CD8-positive, alpha-beta T cell (primary cell): ENCODE measurements at regions of chr21 and their contacts with region 1.

Region 1: DNA sequence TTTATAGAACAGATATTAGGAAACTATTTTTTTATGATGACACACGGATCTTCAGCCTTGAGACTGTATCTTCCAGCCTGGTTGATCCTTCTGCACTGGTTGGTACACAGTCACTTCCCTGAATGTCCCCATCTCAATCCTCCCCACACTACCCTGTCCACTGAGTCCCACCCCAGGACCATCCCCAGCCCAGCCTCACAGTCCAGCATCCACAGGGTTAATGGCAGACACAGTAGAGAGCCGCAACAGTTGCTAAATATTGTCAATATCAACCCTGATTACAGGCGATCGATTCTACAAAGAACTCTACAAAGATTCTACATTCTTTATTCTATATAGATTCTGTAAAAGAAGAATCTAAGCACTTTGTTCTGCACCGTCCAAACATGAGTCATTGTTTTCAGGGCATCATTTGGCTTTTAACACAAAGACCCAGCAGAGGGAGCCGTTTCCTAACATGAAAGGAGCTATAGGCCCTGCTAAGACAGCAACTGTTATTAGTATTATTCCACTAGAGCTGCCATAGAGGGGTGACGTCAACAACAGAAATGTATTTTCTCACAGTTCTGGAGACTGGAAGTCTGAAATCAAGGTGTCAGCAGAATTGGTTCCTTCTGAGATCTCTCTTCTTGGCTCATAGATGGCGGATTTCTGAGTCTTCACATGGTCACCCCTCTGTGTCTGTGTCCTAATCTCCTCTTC is 30.1 kb upstream of the IFNAR2 start:
- DNase-seq: peak; percentile 63 to 92 (median 82)
- ATAC-seq: peak; percentile 93
- H3K4me3 ChIP-seq: no peak overlapping the region
- H3K4me3 Mint-ChIP-seq: no peak overlapping the region
- H3K27ac ChIP-seq: no peak overlapping the region
- H3K27ac Mint-ChIP-seq: peak overlapping the region; percentile 84
- H3K4me1 ChIP-seq: peaks cover 19% of the 10 kb centered on the region
- H3K4me1 Mint-ChIP-seq: peaks cover 28% of the 10 kb centered on the region
- H3K27me3 ChIP-seq: no peaks in the 10 kb centered on the region
- H3K27me3 Mint-ChIP-seq: no peaks in the 10 kb centered on the region
- CTCF ChIP-seq: peak; percentile 77

Region 2: DNA sequence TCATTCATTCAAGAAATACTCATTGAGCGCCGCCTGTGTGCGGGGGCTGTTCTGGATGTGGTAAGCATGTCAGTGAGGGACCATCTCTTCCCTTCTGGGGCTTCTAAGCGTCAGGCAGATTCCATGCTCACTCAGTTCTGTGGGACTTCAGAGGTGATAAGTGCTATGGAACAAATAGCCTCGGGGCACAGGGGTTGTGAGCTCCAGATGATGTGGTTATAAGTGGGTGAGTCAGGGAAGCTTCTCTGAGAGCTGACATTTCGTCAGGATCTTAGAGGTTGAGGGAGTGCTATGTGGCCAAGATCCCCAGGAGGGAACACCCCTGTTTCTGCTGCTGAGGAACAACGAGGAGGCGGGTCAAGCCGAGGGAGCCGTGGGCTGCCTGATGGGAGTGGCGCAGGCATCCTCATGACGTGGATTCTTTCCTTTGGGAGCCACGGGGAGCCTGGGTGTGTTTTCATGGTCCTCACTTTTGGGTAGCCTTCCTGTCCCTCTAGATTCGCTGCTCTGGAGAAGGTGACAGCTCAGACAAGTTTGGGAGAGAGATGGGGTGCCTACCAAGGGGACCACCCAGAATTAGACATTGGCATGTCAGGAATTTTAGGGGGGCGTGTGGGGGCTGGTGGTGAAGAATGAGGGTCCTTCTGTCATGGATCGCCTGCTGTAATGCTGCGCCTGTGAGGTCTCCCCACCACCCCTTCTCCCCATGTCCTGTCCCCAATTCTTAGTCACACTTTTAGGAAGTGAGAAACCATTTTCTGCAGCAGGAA is 1288.3 kb before region 1 on chr21:
- CTCF ChIA-PET with region 1: no interaction called
- POLR2A ChIA-PET with region 1: no interaction called
- intact Hi-C with region 1: no loop called
- DNase-seq: no peak
- ATAC-seq: no peak
- H3K4me3 ChIP-seq: no peak overlapping the region
- H3K4me3 Mint-ChIP-seq: no peak overlapping the region
- H3K27ac ChIP-seq: no peak overlapping the region
- H3K27ac Mint-ChIP-seq: no peak overlapping the region
- H3K4me1 ChIP-seq: no peaks in the 10 kb centered on the region
- H3K4me1 Mint-ChIP-seq: no peaks in the 10 kb centered on the region
- H3K27me3 ChIP-seq: no peaks in the 10 kb centered on the region
- H3K27me3 Mint-ChIP-seq: peaks cover 25% of the 10 kb centered on the region
- CTCF ChIP-seq: no peak

Region 3: GRCh38 chr21:32653311-32653901 is 546.3 kb before region 1 on chr21:
- CTCF ChIA-PET with region 1: no interaction called
- POLR2A ChIA-PET with region 1: no interaction called
- intact Hi-C with region 1: loop called (anchors 2 kb)
- DNase-seq: peak in 4 of 9 experiments; percentile 12 to 52 (median 31)
- ATAC-seq: peak; percentile 52
- H3K4me3 ChIP-seq: no peak overlapping the region
- H3K4me3 Mint-ChIP-seq: no peak overlapping the region
- H3K27ac ChIP-seq: no peak overlapping the region
- H3K27ac Mint-ChIP-seq: no peak overlapping the region
- H3K4me1 ChIP-seq: no peaks in the 10 kb centered on the region
- H3K4me1 Mint-ChIP-seq: no peaks in the 10 kb centered on the region
- H3K27me3 ChIP-seq: no peaks in the 10 kb centered on the region
- H3K27me3 Mint-ChIP-seq: no peaks in the 10 kb centered on the region
- CTCF ChIP-seq: peak; percentile 62

Region 4: DNA sequence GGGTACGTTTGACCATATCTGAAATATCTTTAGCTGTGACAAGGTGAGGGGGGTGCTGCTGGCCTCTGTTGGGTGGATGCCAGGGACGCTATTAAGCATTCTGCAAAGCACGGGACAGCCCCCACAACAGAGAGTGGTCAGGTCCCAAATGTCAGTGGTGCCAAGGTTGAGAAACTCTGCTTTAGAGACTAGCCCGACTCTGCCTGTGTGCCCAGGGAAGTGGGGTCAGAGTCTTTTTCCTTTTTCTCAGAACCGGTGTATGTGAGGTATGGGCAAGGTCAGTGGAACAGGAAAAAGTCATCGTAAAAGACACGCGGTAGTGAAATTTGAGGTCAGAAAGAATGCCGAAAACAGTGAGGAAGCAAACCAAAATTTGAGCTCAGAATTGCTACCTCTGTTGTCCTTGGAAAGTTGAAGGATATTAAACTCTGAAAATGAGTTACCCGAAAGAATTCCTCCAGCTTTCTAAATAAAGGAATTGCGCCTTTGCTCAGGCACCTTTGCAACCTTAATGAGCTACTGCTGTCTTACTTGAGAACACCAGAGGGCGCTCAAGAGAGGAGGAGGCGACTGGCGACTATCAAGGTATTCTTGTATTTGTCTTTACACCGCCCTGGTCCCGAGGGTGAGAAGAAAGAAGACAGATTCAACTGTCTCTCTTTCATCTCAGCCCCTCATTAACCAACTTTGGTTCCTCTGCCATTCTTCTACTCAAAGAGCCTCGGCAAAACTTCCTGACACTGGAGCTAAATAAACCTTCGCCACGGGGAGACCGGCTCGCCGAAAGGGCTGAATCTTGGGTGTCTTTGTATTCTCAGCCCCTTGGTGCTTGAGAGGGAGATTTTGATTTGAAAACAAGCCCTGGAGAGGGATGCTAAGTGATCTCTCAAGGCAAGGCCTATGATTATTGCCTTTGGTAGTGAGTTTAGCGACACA is 259.3 kb before region 1 on chr21:
- CTCF ChIA-PET with region 1: interaction called, 31 read pairs
- POLR2A ChIA-PET with region 1: interaction called, 3 read pairs
- intact Hi-C with region 1: loop called (anchors 1 kb)
- DNase-seq: peak in 8 of 9 experiments; percentile 15 to 75 (median 44)
- ATAC-seq: peak; percentile 54
- H3K4me3 ChIP-seq: no peak overlapping the region
- H3K4me3 Mint-ChIP-seq: no peak overlapping the region
- H3K27ac ChIP-seq: no peak overlapping the region
- H3K27ac Mint-ChIP-seq: no peak overlapping the region
- H3K4me1 ChIP-seq: no peaks in the 10 kb centered on the region
- H3K4me1 Mint-ChIP-seq: peaks cover 3% of the 10 kb centered on the region
- H3K27me3 ChIP-seq: no peaks in the 10 kb centered on the region
- H3K27me3 Mint-ChIP-seq: no peaks in the 10 kb centered on the region
- CTCF ChIP-seq: peak; percentile 74

Region 5: GRCh38 chr21:33011462-33011861 is 188.2 kb before region 1 on chr21:
- CTCF ChIA-PET with region 1: no interaction called
- POLR2A ChIA-PET with region 1: no interaction called
- intact Hi-C with region 1: no loop called
- DNase-seq: peak in 1 of 9 experiments; percentile 33
- ATAC-seq: no peak
- H3K4me3 ChIP-seq: no peak overlapping the region
- H3K4me3 Mint-ChIP-seq: no peak overlapping the region
- H3K27ac ChIP-seq: no peak overlapping the region
- H3K27ac Mint-ChIP-seq: no peak overlapping the region
- H3K4me1 ChIP-seq: no peaks in the 10 kb centered on the region
- H3K4me1 Mint-ChIP-seq: no peaks in the 10 kb centered on the region
- H3K27me3 ChIP-seq: peaks cover 0 to 6% of the 10 kb centered on the region in 2 experiments
- H3K27me3 Mint-ChIP-seq: peaks cover 36% of the 10 kb centered on the region
- CTCF ChIP-seq: no peak

Region 6: DNA sequence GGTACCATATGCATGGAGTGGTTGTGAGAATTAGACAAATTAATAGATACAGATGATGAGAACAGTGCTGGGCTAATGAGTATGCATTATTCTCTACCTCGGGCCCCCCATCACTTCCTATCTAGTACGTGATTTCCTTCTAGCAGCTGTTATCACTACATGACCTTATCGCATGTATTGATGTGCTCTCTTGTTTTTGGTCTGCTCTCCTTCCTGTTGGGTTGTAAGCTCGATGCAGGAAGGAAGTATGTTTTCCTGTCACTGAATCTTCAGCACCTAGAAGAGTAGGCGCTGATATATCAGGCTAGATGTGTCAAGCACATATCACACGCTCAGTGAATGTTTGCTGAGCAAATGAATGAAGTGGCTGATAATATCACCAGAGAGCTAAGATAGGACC is 13.8 kb before region 1 on chr21:
- CTCF ChIA-PET with region 1: interaction called, 21 read pairs
- POLR2A ChIA-PET with region 1: interaction called, 5 read pairs
- intact Hi-C with region 1: no loop called
- DNase-seq: peak in 6 of 9 experiments; percentile 18 to 73 (median 35)
- ATAC-seq: peak; percentile 88
- H3K4me3 ChIP-seq: peak overlapping the region in 1 of 2 experiments; percentile 1
- H3K4me3 Mint-ChIP-seq: peak overlapping the region; percentile 51
- H3K27ac ChIP-seq: peak overlapping the region in 1 of 2 experiments; percentile 68
- H3K27ac Mint-ChIP-seq: peak overlapping the region; percentile 85
- H3K4me1 ChIP-seq: peaks cover 22% of the 10 kb centered on the region
- H3K4me1 Mint-ChIP-seq: peaks cover 35% of the 10 kb centered on the region
- H3K27me3 ChIP-seq: no peaks in the 10 kb centered on the region
- H3K27me3 Mint-ChIP-seq: no peaks in the 10 kb centered on the region
- CTCF ChIP-seq: no peak

Region 7: DNA sequence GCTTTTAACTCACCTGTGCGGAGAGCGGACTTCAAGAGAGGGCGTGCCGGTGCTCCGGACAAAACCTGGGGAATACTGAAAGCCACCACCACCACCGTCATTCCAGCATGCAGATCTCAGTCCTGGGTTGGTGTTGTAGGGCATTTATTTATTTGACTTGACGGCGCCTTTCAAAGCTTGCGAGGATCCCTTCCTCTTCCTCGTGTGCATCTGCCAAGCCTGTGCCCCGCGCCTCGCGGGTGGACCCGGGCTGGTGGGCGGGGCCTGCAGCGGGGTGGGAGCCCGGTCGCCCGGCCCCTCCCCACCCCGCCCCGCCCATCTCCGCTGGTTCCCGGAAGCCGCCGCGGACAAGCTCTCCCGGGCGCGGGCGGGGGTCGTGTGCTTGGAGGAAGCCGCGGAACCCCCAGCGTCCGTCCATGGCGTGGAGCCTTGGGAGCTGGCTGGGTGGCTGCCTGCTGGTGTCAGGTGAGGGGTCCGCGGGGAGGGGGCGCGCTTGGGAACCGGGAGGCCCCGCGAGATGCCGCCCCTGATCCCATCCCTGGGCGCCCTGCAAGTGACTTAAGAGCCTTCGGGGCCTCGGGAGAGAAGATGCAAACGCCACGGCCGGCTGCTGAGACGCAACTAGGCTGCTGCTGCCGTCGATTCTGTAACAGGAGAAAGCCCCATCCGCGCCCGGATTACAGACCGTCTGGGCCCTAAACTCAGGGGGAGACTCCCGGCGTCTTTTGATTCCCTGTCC is 66.6 kb after region 1 on chr21 and contains the start of gene IL10RB:
- CTCF ChIA-PET with region 1: interaction called, 8 read pairs
- POLR2A ChIA-PET with region 1: interaction called, 3 read pairs
- intact Hi-C with region 1: loop called (anchors 1 to 2 kb)
- DNase-seq: peak; percentile 21 to 88 (median 72)
- ATAC-seq: peak; percentile 85
- H3K4me3 ChIP-seq: peak within 1 kb of the TSS; percentile 84 to 89
- H3K4me3 Mint-ChIP-seq: peak within 1 kb of the TSS; percentile 93
- H3K27ac ChIP-seq: peak within 1 kb of the TSS; percentile 70 to 75
- H3K27ac Mint-ChIP-seq: peak within 1 kb of the TSS; percentile 95
- H3K4me1 ChIP-seq: peaks cover 46% of the 10 kb centered on the region
- H3K4me1 Mint-ChIP-seq: peaks cover 66% of the 10 kb centered on the region
- H3K27me3 ChIP-seq: no peaks in the 10 kb centered on the region
- H3K27me3 Mint-ChIP-seq: no peaks in the 10 kb centered on the region
- CTCF ChIP-seq: no peak
- total RNA-seq, gene IL10RB: 7.4 to 8.2 TPM

Region 8: GRCh38 chr21:33360881-33361602 is 161.4 kb after region 1 on chr21:
- CTCF ChIA-PET with region 1: interaction called, 37 read pairs
- POLR2A ChIA-PET with region 1: interaction called, 10 read pairs
- intact Hi-C with region 1: loop called (anchors 1 kb)
- DNase-seq: peak; percentile 76 to 94 (median 85)
- ATAC-seq: peak; percentile 69
- H3K4me3 ChIP-seq: peak overlapping the region; percentile 50 to 61
- H3K4me3 Mint-ChIP-seq: peak overlapping the region; percentile 84
- H3K27ac ChIP-seq: peak overlapping the region; percentile 61 to 71
- H3K27ac Mint-ChIP-seq: peak overlapping the region; percentile 91
- H3K4me1 ChIP-seq: peaks cover 15% of the 10 kb centered on the region
- H3K4me1 Mint-ChIP-seq: peaks cover 19% of the 10 kb centered on the region
- H3K27me3 ChIP-seq: peaks cover 0 to 3% of the 10 kb centered on the region in 2 experiments
- H3K27me3 Mint-ChIP-seq: no peaks in the 10 kb centered on the region
- CTCF ChIP-seq: peak; percentile 93

Region 9: DNA sequence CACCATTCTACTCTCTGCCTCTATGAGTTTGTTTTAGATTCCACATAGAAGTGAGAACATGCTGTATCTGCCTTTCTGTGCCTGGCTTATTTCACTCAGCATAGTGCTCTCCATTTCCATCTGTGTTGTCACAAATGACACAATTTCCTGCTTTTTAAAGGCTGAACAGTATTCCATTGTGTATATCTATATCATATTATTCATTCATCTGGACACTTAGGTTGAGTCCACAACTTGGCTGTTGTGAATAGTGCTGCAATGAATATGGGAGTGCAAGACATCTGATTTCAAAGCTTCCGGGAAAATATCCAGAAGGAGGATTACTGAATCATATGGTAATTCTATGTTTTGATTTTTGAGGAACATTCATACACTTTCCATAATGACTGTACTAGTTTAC is 408.9 kb after region 1 on chr21:
- CTCF ChIA-PET with region 1: interaction called, 12 read pairs
- POLR2A ChIA-PET with region 1: no interaction called
- intact Hi-C with region 1: loop called (anchors 5 kb)
- DNase-seq: no peak
- ATAC-seq: no peak
- H3K4me3 ChIP-seq: no peak overlapping the region
- H3K4me3 Mint-ChIP-seq: no peak overlapping the region
- H3K27ac ChIP-seq: no peak overlapping the region
- H3K27ac Mint-ChIP-seq: no peak overlapping the region
- H3K4me1 ChIP-seq: no peaks in the 10 kb centered on the region
- H3K4me1 Mint-ChIP-seq: peaks cover 3% of the 10 kb centered on the region
- H3K27me3 ChIP-seq: no peaks in the 10 kb centered on the region
- H3K27me3 Mint-ChIP-seq: no peaks in the 10 kb centered on the region
- CTCF ChIP-seq: no peak